ENCODE measurements at regions of chr18 and their contacts with region 1.

Region 1: GRCh38 chr18:21111341-21112139 is at the start of gene ROCK1:
- DNase-seq: peak; percentile 100
- ATAC-seq: peak; percentile 96 to 98
- H3K4me3 ChIP-seq: peak within 1 kb of the TSS; percentile 97
- H3K27ac ChIP-seq: peak within 1 kb of the TSS; percentile 98
- H3K4me1 ChIP-seq: peaks cover 31% of the 10 kb centered on the region
- H3K27me3 ChIP-seq: no peaks in the 10 kb centered on the region
- CTCF ChIP-seq: no peak
- total RNA-seq, gene ROCK1: 67.0 TPM

Region 2: DNA sequence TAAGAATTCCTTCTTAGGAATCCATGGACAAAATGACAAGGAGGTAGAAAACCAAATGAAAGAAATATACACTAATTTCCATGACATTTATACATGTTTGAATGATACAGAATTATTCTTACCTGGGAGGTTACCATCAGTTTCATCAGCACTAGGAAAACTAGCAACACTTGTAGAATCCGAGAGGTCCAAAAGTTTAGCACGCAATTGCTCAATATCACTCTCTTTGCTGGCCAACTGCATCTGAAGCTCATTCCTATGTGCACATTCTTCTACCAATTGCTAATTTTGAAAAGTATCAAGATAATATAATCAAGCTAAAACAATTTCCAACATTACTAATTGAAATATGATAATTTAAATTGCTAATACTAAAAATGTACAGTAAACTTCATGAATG is 144.7 kb before region 1 on chr18:
- intact Hi-C with region 1: no loop called
- DNase-seq: no peak
- ATAC-seq: no peak
- H3K4me3 ChIP-seq: no peak overlapping the region
- H3K27ac ChIP-seq: no peak overlapping the region
- H3K4me1 ChIP-seq: no peaks in the 10 kb centered on the region
- H3K27me3 ChIP-seq: no peaks in the 10 kb centered on the region
- CTCF ChIP-seq: no peak

Region 3: GRCh38 chr18:21163647-21164547 is 52.4 kb after region 1 on chr18:
- intact Hi-C with region 1: loop called (anchors 10 kb)
- DNase-seq: no peak
- ATAC-seq: peak; percentile 76 to 90
- H3K4me3 ChIP-seq: no peak overlapping the region
- H3K27ac ChIP-seq: peak overlapping the region; percentile 61
- H3K4me1 ChIP-seq: peaks cover 13% of the 10 kb centered on the region
- H3K27me3 ChIP-seq: no peaks in the 10 kb centered on the region
- CTCF ChIP-seq: no peak

Region 4: DNA sequence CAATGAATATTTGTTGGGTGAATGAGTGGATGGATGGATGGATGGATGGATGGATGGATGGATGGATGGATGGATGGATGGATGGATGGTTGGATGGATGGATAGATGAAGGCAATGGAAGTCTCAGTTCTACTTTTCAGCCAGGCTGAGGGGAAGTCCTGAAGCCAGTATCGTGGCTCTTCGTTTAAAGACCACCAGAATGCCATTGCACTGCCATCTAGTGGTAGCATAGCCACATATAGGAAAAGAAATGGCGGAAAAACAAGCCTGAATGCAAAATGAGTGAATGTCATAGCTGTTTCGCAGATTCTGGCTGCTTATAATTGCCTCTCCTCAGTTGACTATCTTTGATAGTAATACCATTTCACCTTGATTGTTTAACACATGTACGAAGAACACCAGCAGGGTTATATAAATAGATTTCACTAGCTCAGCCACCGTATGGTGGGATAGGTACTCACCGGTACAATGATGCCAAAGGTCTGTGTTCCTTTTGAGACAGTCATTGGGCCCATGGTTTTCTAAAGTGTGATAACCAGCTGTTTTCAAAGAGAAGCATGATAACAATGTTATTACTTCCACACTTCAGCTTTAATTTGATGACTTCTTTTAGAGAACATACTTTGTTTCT is 68.2 kb after region 1 on chr18:
- intact Hi-C with region 1: no loop called
- DNase-seq: no peak
- ATAC-seq: peak; percentile 74 to 85
- H3K4me3 ChIP-seq: no peak overlapping the region
- H3K27ac ChIP-seq: no peak overlapping the region
- H3K4me1 ChIP-seq: no peaks in the 10 kb centered on the region
- H3K27me3 ChIP-seq: no peaks in the 10 kb centered on the region
- CTCF ChIP-seq: peak; percentile 73

Region 5: DNA sequence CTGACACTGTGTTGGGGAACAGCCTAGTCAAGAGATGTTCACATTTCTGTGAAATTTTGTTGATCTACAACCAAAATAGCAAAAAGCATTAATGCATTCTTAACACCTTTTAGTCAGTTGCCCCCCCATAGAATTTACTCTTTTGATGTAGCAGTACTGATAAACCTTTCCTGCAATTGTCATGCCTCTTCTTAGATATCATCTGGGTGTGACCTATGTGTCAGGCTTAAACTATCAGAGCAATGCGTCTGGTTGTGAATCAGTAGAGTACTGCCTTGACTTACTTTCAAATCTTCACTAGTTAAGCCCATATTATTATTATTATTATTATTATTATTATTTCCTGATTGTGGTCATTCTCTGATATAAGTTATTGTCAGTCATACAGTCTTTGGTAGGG is 192.4 kb after region 1 on chr18:
- intact Hi-C with region 1: no loop called
- DNase-seq: no peak
- ATAC-seq: no peak
- H3K4me3 ChIP-seq: no peak overlapping the region
- H3K27ac ChIP-seq: no peak overlapping the region
- H3K4me1 ChIP-seq: no peaks in the 10 kb centered on the region
- H3K27me3 ChIP-seq: no peaks in the 10 kb centered on the region
- CTCF ChIP-seq: no peak

Region 6: DNA sequence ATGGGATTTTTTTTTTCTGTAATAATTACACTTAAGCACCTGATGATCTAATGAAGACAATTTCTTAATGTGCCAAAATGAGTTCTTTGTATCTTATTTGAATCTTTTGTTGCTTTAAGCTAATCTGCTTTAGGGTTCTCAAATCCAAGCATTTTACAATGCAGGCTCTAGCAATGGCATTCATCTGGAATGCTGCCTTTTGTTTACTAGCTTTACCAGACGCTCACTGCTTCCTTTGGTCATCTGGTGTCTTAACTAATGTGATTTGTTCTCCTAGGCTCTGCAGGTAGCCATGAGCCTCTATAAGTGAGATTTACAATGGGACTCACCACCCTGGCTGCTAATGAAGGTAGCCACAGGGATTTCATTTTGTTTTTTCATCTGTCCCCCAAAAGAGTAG is 230.8 kb after region 1 on chr18:
- intact Hi-C with region 1: no loop called
- DNase-seq: no peak
- ATAC-seq: no peak
- H3K4me3 ChIP-seq: no peak overlapping the region
- H3K27ac ChIP-seq: no peak overlapping the region
- H3K4me1 ChIP-seq: no peaks in the 10 kb centered on the region
- H3K27me3 ChIP-seq: no peaks in the 10 kb centered on the region
- CTCF ChIP-seq: no peak